Gastrocnemius medialis (tissue), 4 donors: ENCODE measurements at regions of chrX and their contacts with region 1.

Region 1: DNA sequence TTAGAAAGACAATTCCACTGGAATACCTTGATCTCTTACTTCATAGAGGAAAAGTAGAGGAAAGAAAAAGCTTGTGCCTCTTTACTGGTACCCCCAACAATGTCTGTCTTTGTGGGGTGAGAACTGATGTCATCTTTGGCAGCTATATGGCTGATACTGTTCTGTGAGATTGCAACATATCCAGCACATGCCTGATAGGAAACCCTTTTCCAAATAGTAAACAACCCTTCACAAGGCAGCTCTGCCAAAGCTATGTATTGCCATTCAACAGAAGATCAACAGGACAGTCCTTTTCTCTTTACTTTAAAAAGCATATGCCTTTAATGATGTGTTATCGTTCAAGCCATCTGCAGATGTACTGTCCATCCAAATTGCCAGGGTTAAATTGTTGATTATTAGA is 105.9 kb downstream of the IL1RAPL1 start:
- DNase-seq: no peak
- ATAC-seq: no peak
- H3K4me3 ChIP-seq: no peak overlapping the region
- H3K27ac ChIP-seq: no peak overlapping the region
- H3K4me1 ChIP-seq: no peaks in the 10 kb centered on the region
- H3K27me3 ChIP-seq: no peaks in the 10 kb centered on the region
- CTCF ChIP-seq: no peak
- POLR2A ChIP-seq: no peak

Region 2: DNA sequence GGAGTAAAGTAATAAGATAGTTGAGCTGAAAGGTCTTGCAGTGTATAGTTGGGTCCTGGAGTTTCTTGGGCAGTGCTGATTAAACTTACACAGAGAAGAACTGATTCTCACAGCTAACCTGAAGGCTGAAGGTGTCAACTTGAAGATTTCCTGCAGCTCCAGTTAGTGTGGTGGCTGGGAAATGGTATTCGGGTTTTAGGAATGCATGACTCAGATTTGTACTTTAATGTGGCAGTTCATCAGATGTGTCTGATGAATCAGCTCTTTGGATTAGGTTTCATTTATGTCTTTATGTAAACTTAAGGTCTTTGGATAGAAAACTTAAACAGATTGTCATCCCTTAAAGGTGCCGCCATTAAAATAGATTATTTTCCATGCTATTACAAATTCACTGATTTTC is 94.1 kb after region 1 on chrX:
- in situ Hi-C with region 1: loop called in 1 of 4 experiments (anchors 25 kb)
- intact Hi-C with region 1: no loop called
- DNase-seq: no peak
- ATAC-seq: no peak
- H3K4me3 ChIP-seq: no peak overlapping the region
- H3K27ac ChIP-seq: no peak overlapping the region
- H3K4me1 ChIP-seq: no peaks in the 10 kb centered on the region
- H3K27me3 ChIP-seq: no peaks in the 10 kb centered on the region
- CTCF ChIP-seq: no peak
- POLR2A ChIP-seq: no peak